Mammary epithelial cell (primary cell): ENCODE measurements at regions of chr2 and their contacts with region 1.

Region 1: GRCh38 chr2:162926501-162926900 is 87.9 kb upstream of the KCNH7 start:
- DNase-seq: peak; percentile 97
- H3K4me3 ChIP-seq: peak overlapping the region; percentile 3 to 41 (median 38)
- H3K27ac ChIP-seq: peak overlapping the region; percentile 90
- H3K4me1 ChIP-seq: peaks cover 41% of the 10 kb centered on the region
- H3K27me3 ChIP-seq: no peaks in the 10 kb centered on the region
- CTCF ChIP-seq: no peak

Region 2: DNA sequence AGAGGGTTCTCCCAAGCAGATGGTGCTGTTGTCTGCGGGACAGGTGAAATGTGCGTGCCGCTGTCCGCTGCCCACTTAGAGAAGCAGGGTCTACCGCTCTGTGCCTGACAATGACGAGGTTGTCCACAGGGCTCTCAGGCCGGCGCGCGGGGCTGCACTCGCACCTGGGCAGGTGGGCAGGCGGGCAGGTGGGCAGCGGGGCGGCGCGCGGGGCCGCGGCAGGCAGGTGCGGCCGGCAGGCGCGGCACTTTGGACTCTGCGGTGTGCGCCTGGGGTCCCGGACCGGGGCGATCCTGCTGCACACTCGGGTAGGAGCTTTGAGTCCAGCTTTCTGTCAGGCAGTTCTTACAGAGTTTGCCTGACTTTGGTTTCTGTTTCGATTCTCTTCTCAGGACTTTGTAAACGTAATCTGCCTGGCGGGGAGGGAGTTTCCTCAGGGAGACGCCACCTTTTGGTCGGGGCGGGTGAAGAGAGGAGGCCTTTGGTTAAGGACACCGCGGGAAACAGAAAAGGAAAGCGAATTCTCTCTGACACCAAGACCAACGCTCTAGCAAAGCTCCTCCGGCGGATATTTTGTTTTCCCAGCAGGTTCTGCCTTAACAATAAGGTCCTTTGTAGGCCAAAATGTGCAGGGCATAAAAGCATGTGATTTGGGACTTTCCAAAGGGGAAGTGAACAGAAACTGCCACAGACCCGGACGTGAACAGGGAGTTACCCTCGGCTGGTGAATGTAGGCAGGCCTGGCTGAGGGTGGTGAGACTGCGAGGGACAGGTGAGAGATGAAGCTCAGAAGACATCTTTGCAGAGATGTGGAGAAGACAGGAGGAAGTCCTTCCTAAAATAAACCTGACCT is 607.9 kb before region 1 on chr2 and contains the start of gene IFIH1:
- CTCF ChIA-PET with region 1: no interaction called
- dilution Hi-C with region 1: no loop called
- in situ Hi-C with region 1: no loop called
- intact Hi-C with region 1: loop called (anchors 5 kb)
- DNase-seq: peak; percentile 92
- H3K4me3 ChIP-seq: peak within 1 kb of the TSS; percentile 49 to 87 (median 71)
- H3K27ac ChIP-seq: peak within 1 kb of the TSS; percentile 89
- H3K4me1 ChIP-seq: peaks cover 6% of the 10 kb centered on the region
- H3K27me3 ChIP-seq: no peaks in the 10 kb centered on the region
- CTCF ChIP-seq: peak in 1 of 2 donors; percentile 51
- total RNA-seq, gene IFIH1: 6.3 to 6.7 TPM

Region 3: GRCh38 chr2:163123526-163123925 is 197.0 kb after region 1 on chr2:
- CTCF ChIA-PET with region 1: no interaction called
- dilution Hi-C with region 1: no loop called
- in situ Hi-C with region 1: no loop called
- intact Hi-C with region 1: no loop called
- DNase-seq: no peak
- H3K4me3 ChIP-seq: no peak overlapping the region
- H3K27ac ChIP-seq: no peak overlapping the region
- H3K4me1 ChIP-seq: no peaks in the 10 kb centered on the region
- H3K27me3 ChIP-seq: peaks cover 4% of the 10 kb centered on the region
- CTCF ChIP-seq: no peak